Caco-2 (cell line): ENCODE measurements at regions of chr14 and their contacts with region 1.

Region 1: DNA sequence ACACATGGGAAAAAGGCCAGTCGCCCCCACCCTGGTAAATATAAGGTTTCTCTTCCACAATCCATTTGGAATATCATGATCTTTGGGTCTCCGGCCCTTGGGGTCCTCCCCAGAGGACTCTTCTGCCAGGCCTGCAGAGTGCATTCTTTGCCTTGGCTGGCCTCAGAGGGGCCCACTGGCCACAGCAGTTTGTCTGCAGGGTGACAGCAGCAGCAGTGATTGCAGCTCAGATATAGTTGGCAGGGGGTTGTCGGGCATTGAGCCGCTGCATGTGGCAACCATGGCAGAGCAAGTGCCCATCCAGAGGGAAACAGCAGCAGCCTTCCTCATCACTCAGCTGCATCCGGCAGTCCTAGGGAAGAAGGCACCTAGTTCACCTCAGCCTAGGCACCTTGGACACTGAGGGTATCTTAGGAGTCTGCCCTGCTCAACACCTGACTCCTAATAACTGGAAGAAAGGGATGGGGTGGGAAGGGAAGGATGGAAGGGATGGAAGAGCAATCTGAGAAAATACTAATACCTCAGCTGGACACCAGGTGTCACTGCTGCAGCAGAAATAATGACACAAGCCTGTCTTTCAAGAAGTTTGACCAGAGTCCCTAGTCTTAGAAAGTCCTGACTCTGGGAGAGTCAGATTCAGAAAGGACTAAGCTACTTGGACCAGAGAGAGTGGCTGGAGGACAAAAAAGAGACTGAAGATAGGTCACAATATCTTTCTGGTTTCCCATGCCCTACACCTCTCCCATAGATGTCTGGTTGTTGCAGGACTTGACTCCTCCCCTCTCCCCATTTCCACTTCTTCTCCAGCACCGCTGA is 8.9 kb downstream of the AJUBA start:
- DNase-seq: peak; percentile 58 to 76
- H3K4me3 ChIP-seq: no peak overlapping the region
- H3K4me3 Mint-ChIP-seq: peak overlapping the region; percentile 27
- H3K27ac Mint-ChIP-seq: peak overlapping the region; percentile 84
- H3K4me1 ChIP-seq: peaks cover 49% of the 10 kb centered on the region
- H3K4me1 Mint-ChIP-seq: peaks cover 45% of the 10 kb centered on the region
- H3K27me3 ChIP-seq: no peaks in the 10 kb centered on the region
- H3K27me3 Mint-ChIP-seq: no peaks in the 10 kb centered on the region
- CTCF ChIP-seq: peak; percentile 70 to 71

Region 2: GRCh38 chr14:22918804-22919600 is 54.4 kb before region 1 on chr14 and contains the start of gene RBM23:
- CTCF ChIA-PET with region 1: interaction called, 5 read pairs
- POLR2A ChIA-PET with region 1: interaction called, 9 read pairs
- intact Hi-C with region 1: loop called (anchors 1 kb)
- DNase-seq: peak; percentile 98
- H3K4me3 ChIP-seq: peak within 1 kb of the TSS; percentile 65
- H3K4me3 Mint-ChIP-seq: peak within 1 kb of the TSS; percentile 90
- H3K27ac Mint-ChIP-seq: peak within 1 kb of the TSS; percentile 100
- H3K4me1 ChIP-seq: peaks cover 8% of the 10 kb centered on the region
- H3K4me1 Mint-ChIP-seq: peaks cover 6% of the 10 kb centered on the region
- H3K27me3 ChIP-seq: no peaks in the 10 kb centered on the region
- H3K27me3 Mint-ChIP-seq: peaks cover 2% of the 10 kb centered on the region
- CTCF ChIP-seq: no peak
- total RNA-seq, gene RBM23: 67.0 and 70.0 TPM in 2 replicates

Region 3: GRCh38 chr14:22955702-22956569 is 17.5 kb before region 1 on chr14:
- CTCF ChIA-PET with region 1: interaction called, 7 read pairs
- POLR2A ChIA-PET with region 1: interaction called, 7 read pairs
- intact Hi-C with region 1: loop called (anchors 2 kb)
- DNase-seq: no peak
- H3K4me3 ChIP-seq: peak overlapping the region; percentile 58
- H3K4me3 Mint-ChIP-seq: peak overlapping the region; percentile 94
- H3K27ac Mint-ChIP-seq: peak overlapping the region; percentile 96
- H3K4me1 ChIP-seq: peaks cover 18% of the 10 kb centered on the region; the same call in 1 of the 2 replicates
- H3K4me1 Mint-ChIP-seq: peaks cover 25% of the 10 kb centered on the region
- H3K27me3 ChIP-seq: no peaks in the 10 kb centered on the region
- H3K27me3 Mint-ChIP-seq: no peaks in the 10 kb centered on the region
- CTCF ChIP-seq: no peak

Region 4: DNA sequence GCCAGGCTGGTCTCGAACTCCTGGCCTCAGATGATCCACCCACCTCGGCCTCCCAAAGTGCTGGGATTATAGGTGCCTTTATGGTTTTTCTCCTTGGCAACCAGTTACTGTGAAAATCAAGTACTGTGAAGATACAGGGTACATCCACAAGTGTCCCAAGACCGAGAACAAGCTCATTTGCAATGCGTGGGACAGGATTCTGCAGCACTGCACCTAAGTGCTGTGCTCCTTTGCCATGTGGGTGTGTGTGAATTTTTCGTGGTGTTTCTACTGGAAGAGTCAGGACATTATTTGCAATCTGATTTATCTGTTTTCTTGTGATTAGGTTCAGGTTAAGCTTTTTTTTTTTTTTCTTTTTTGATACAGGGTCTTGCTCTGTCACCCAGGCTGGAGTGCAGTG is 43.7 kb after region 1 on chr14:
- CTCF ChIA-PET with region 1: no interaction called
- POLR2A ChIA-PET with region 1: interaction called, 11 read pairs
- intact Hi-C with region 1: no loop called
- DNase-seq: no peak
- H3K4me3 ChIP-seq: no peak overlapping the region
- H3K4me3 Mint-ChIP-seq: no peak overlapping the region
- H3K27ac Mint-ChIP-seq: no peak overlapping the region
- H3K4me1 ChIP-seq: no peaks in the 10 kb centered on the region
- H3K4me1 Mint-ChIP-seq: no peaks in the 10 kb centered on the region
- H3K27me3 ChIP-seq: no peaks in the 10 kb centered on the region
- H3K27me3 Mint-ChIP-seq: no peaks in the 10 kb centered on the region
- CTCF ChIP-seq: no peak

Region 5: DNA sequence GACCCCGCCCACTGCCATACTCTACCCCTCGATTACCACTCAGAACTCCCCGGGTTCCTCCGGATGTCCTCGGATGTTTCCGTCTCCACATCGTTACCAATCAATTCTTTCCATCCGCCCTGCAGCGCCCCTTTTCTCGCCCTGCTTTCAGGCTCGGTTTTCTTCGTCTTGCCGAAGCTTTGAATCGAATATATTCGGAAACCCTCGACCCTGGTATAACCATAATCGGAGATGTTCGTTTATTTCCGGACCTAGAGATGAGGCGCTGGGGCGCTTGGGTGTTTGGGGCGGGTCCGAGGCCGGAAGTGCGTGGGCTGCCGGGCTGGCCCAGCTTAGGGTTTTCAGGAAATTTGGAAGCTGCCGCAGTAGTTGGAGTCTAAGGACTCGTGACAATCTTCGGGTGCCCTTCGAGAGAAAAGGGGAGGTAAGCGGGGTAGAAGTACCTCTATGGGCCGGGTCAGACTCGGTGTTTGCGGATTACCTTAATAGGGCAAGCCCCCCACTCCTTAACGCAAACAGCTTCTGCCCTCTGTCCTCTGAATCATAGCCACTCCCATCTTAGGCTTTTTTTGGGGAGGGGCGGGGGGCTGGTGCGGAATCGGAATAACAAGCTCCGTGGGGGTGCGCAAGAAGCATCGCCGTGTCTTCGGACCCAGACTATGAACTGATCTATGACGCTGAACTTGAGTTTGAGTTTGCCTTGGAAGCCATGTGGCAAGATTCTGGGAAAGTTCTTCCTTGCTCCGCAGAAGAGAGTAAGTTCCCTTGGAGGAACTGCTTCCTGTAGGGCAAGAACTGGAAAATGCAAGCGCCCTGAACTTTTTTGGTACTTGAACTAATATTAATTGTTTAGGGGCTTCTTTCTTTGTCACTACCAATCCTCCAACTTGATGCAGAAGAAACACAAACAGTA is 122.0 kb after region 1 on chr14 and contains the start of gene C14orf119:
- CTCF ChIA-PET with region 1: no interaction called
- POLR2A ChIA-PET with region 1: interaction called, 15 read pairs
- intact Hi-C with region 1: no loop called
- DNase-seq: peak; percentile 98 to 99
- H3K4me3 ChIP-seq: peak within 1 kb of the TSS; percentile 79
- H3K4me3 Mint-ChIP-seq: no peak within 1 kb of the TSS
- H3K27ac Mint-ChIP-seq: no peak within 1 kb of the TSS
- H3K4me1 ChIP-seq: peaks cover 3% of the 10 kb centered on the region; the same call in 1 of the 2 replicates
- H3K4me1 Mint-ChIP-seq: peaks cover 10% of the 10 kb centered on the region
- H3K27me3 ChIP-seq: no peaks in the 10 kb centered on the region
- H3K27me3 Mint-ChIP-seq: no peaks in the 10 kb centered on the region
- CTCF ChIP-seq: no peak
- total RNA-seq, gene C14orf119: 46.3 and 52.0 TPM in 2 replicates

Region 6: DNA sequence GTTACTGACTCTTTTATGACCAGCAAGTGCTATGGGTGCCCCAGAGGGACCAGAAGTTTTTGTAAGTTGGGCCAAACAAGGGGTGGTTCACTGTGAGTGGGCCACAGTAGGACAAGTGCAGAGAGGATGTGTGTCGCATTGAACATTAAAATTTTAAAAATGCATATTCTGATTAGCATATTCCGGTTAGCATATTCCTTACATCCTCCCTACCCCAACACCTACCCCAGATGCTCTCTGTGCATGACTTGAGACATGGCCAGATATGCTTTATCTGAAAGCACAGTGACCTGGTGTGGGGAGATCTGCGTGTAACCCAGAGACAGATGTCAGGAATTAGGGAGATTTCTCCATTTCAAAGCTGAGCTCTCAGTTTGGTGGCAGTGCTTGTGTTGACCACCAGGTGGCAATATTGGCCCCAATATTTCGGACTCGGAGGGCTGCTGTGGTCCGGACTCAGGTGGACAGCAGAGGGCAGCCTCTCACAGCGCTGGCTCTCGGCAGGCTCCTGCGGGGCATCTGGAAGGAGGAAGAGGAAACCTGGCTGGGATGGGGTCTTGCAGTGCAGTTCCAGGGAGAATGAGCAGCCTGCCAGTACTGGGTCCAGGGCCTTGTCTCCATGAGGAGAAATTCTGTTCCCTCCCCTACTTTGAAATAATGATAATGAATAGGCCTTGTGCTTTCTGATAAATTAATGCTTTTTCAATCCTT is 147.3 kb after region 1 on chr14:
- CTCF ChIA-PET with region 1: no interaction called
- POLR2A ChIA-PET with region 1: no interaction called
- intact Hi-C with region 1: no loop called
- DNase-seq: peak; percentile 88 to 89
- H3K4me3 ChIP-seq: no peak overlapping the region
- H3K4me3 Mint-ChIP-seq: no peak overlapping the region
- H3K27ac Mint-ChIP-seq: no peak overlapping the region
- H3K4me1 ChIP-seq: no peaks in the 10 kb centered on the region
- H3K4me1 Mint-ChIP-seq: peaks cover 7% of the 10 kb centered on the region
- H3K27me3 ChIP-seq: no peaks in the 10 kb centered on the region
- H3K27me3 Mint-ChIP-seq: no peaks in the 10 kb centered on the region
- CTCF ChIP-seq: peak; percentile 96 to 99